Aorta (tissue), 5 donors: ENCODE measurements at regions of chr7 and their contacts with region 1.

Region 1: DNA sequence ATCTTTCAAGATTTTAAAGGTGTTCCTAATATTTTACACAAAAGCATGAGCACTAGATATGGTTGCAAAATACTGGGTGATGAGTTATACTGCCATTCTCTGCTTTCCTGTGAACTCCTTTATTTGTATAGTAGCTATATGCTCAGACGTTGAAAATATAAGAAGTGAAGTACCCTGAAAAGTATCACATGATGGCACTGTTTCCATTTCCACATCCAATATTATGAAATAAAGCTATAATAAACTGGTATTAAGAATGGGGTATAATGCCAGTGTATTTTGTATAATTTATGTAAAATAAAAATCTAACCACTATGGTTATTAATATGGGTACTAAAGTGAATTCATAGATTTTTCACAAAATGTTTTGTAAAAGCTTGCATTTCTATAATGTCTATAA is 79.6 kb upstream of the FOXP2 start:
- DNase-seq: no peak
- ATAC-seq: no peak
- H3K4me3 ChIP-seq: no peak overlapping the region
- H3K27ac ChIP-seq: no peak overlapping the region
- H3K4me1 ChIP-seq: no peaks in the 10 kb centered on the region
- H3K27me3 ChIP-seq: no peaks in the 10 kb centered on the region

Region 2: GRCh38 chr7:114293289-114294012 is 41.5 kb before region 1 on chr7:
- intact Hi-C with region 1: loop called in 1 of 2 experiments (anchors 2 kb)
- DNase-seq: no peak
- ATAC-seq: no peak
- H3K4me3 ChIP-seq: no peak overlapping the region
- H3K27ac ChIP-seq: no peak overlapping the region
- H3K4me1 ChIP-seq: no peaks in the 10 kb centered on the region
- H3K27me3 ChIP-seq: no peaks in the 10 kb centered on the region

Region 3: DNA sequence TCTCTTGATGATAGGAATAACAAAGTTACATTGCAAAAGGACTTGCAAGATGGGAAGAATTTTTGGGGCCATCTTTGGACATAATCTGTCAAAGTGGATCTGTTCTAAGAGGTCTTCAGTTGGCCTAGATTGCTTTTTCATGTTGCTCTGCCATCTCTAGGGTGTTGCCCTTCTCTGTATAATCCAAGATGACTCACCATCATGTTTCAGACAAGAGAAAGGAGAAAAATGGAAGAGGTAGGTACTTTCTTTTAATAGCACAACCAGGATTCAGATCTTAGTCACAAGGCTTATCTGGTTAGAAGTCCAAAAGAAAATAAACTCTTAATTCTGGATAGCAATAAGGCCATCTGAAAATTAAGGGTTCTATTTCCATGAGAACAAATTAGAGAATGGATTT is 40.9 kb after region 1 on chr7:
- intact Hi-C with region 1: no loop called
- DNase-seq: no peak
- ATAC-seq: no peak
- H3K4me3 ChIP-seq: no peak overlapping the region
- H3K27ac ChIP-seq: no peak overlapping the region
- H3K4me1 ChIP-seq: peaks cover 0 to 1% of the 10 kb centered on the region in 2 donors
- H3K27me3 ChIP-seq: no peaks in the 10 kb centered on the region